Activated CD8-positive, alpha-beta T cell treated with anti-CD3 and anti-CD28 coated beads for 36 hours (primary cell): ENCODE measurements at regions of chr3 and their contacts with region 1.

Region 1: GRCh38 chr3:194592798-194593752 is 40.1 kb downstream of the TMEM44 start:
- DNase-seq: no peak
- ATAC-seq: no peak
- H3K4me3 Mint-ChIP-seq: no peak overlapping the region
- H3K27ac Mint-ChIP-seq: no peak overlapping the region
- H3K4me1 Mint-ChIP-seq: peaks cover 3% of the 10 kb centered on the region
- H3K27me3 Mint-ChIP-seq: no peaks in the 10 kb centered on the region
- CTCF ChIP-seq: no peak

Region 2: DNA sequence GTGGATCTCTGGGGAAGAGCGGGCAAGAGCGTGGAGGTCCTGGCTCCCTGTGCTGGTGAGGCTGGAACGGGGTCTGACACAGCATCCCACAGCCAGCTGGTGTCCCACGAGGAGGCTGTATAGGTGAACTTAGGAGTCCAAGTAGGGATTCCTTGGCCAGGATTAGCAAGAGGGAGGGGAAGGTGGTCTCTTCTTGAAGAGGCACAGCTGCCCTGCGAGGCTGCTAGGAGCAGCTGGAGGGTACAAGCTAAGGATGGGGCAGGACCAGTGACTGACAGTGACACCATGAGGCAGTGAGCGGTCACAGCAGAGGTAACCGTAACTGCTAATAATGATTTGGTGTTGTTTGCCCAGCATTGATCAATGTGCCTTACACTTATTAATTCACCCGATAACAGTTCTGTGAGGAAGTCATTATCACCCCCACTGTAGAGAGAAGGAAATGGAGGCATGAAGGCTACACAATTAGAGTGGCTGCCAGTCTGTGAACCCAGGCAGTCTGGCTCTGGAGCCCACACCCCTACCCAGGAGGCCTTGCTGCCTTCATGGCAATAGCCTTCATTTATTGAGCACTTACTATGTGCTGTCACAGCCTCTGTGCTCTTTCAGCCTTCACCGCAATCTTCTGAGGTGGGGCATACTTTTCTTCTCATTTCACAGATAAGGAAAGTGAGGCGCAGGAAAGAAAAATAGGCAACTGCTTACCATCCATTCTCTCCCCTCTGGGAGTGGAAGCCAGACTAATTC is 19.2 kb before region 1 on chr3:
- CTCF ChIA-PET with region 1: interaction called, 14 read pairs
- POLR2A ChIA-PET with region 1: no interaction called
- intact Hi-C with region 1: no loop called
- DNase-seq: peak; percentile 60
- ATAC-seq: peak; percentile 88
- H3K4me3 Mint-ChIP-seq: no peak overlapping the region
- H3K27ac Mint-ChIP-seq: no peak overlapping the region
- H3K4me1 Mint-ChIP-seq: peaks cover 10% of the 10 kb centered on the region
- H3K27me3 Mint-ChIP-seq: peaks cover 26% of the 10 kb centered on the region
- CTCF ChIP-seq: peak; percentile 53